ENCODE measurements at regions of chr22 and their contacts with region 1.

Region 1: DNA sequence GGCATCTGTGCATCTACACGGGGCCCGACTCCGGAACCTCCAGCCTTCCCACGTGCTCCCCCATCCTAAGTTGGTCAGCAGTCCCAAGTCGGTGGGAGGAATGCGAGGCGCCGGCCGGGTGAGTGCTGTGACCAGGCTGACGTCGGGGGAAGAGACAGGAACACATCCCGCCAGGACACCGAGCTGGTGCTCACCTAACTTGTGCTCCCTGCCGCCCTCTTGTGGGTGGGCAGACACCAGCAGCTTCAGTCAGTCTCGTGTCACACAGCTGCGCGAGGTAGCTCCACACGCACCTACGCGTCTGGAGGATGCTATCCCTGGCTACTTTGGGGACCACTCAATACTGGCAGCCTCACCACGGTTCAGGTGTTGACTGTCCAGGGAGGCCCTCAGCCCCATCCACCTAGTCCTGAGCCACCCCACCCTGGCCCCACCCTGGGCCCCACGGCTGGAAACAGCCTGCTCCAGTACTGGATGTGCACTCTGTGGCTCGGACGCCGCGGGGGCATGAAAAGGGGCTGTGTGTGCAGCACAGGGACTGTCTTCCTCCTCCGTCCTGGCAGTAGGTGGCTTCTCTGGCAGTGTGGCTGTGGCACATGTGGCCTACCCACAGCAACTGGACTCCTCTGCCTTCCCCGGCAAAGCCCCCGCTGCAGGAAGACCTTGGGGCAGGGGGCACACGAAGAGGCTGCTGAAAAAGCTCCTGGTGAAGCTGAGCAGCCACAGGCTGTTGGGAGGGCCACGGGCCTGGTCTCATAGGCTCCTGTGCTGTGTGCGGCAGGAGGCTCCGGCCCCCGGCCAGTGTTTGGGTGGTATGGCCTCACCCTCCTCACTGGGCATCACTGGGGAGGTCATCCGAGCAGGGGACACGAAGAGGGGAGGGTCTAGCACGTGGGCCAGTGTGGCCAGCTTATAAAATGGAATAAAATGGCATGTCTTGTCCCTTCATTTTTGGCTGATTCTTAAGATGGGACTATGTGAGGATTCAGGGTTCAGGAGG is 11.2 kb upstream of the BID start:
- DNase-seq: peak; percentile 56 to 66 (median 65)
- H3K4me3 ChIP-seq: no peak overlapping the region
- H3K4me3 Mint-ChIP-seq: no peak overlapping the region
- H3K27ac ChIP-seq: no peak overlapping the region
- H3K27ac Mint-ChIP-seq: peak overlapping the region in 2 of 7 donors; percentile 43 to 55
- H3K4me1 ChIP-seq: peaks cover 26% of the 10 kb centered on the region
- H3K4me1 Mint-ChIP-seq: peaks cover 7 to 27% (median 12%) of the 10 kb centered on the region in 4 donors
- H3K27me3 ChIP-seq: no peaks in the 10 kb centered on the region
- H3K27me3 Mint-ChIP-seq: no peaks in the 10 kb centered on the region

Region 2: GRCh38 chr22:17597217-17597616 is 188.3 kb before region 1 on chr22:
- CTCF ChIA-PET with region 1: no interaction called
- POLR2A ChIA-PET with region 1: no interaction called
- intact Hi-C with region 1: no loop called
- DNase-seq: no peak
- H3K4me3 ChIP-seq: no peak overlapping the region
- H3K4me3 Mint-ChIP-seq: no peak overlapping the region
- H3K27ac ChIP-seq: no peak overlapping the region
- H3K27ac Mint-ChIP-seq: peak overlapping the region in 1 of 7 donors; percentile 23
- H3K4me1 ChIP-seq: no peaks in the 10 kb centered on the region
- H3K4me1 Mint-ChIP-seq: peaks cover 0 to 4% (median 2%) of the 10 kb centered on the region in 4 donors
- H3K27me3 ChIP-seq: no peaks in the 10 kb centered on the region
- H3K27me3 Mint-ChIP-seq: no peaks in the 10 kb centered on the region

Region 3: DNA sequence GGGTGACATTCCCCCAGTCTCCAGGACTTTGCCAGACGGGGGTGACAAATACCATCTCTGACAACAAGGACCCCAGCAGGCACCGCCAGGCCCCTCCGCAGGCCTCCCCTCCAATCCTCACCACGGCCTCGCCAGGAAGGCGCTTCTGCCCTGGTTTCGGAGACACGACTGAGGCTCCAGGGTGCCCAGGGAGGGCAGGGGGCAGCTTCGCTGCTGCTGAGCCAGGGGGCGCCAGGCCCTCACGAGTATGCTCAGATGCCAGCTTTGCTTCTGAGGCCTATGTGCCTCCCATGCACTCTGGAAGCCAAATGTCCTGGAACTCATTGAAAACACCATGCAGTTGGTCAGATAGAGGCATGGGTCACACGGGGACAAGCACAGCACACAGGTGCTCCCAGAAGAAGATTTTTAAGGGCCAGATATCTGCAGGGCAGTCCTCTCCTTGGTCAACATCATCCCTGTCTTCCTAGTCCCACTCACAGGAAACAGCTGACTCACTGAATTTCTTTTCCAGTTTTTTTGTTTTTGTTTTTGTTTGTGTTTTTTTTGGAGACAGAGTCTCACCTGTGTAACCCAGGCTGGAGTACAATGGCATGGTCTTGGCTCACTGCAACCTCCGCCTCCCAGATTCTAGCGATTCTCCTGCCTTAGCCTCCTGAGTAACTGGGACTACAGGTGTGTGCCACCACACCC is 31.1 kb before region 1 on chr22:
- CTCF ChIA-PET with region 1: interaction called, 240 read pairs
- POLR2A ChIA-PET with region 1: interaction called, 3 read pairs
- intact Hi-C with region 1: loop called (anchors 1 kb)
- DNase-seq: peak in 1 of 5 donors; percentile 16
- H3K4me3 ChIP-seq: no peak overlapping the region
- H3K4me3 Mint-ChIP-seq: no peak overlapping the region
- H3K27ac ChIP-seq: no peak overlapping the region
- H3K27ac Mint-ChIP-seq: peak overlapping the region in 3 of 7 donors; percentile 27 to 67 (median 42)
- H3K4me1 ChIP-seq: no peaks in the 10 kb centered on the region
- H3K4me1 Mint-ChIP-seq: peaks cover 9 to 25% (median 10%) of the 10 kb centered on the region in 4 donors
- H3K27me3 ChIP-seq: no peaks in the 10 kb centered on the region
- H3K27me3 Mint-ChIP-seq: no peaks in the 10 kb centered on the region

Region 4: DNA sequence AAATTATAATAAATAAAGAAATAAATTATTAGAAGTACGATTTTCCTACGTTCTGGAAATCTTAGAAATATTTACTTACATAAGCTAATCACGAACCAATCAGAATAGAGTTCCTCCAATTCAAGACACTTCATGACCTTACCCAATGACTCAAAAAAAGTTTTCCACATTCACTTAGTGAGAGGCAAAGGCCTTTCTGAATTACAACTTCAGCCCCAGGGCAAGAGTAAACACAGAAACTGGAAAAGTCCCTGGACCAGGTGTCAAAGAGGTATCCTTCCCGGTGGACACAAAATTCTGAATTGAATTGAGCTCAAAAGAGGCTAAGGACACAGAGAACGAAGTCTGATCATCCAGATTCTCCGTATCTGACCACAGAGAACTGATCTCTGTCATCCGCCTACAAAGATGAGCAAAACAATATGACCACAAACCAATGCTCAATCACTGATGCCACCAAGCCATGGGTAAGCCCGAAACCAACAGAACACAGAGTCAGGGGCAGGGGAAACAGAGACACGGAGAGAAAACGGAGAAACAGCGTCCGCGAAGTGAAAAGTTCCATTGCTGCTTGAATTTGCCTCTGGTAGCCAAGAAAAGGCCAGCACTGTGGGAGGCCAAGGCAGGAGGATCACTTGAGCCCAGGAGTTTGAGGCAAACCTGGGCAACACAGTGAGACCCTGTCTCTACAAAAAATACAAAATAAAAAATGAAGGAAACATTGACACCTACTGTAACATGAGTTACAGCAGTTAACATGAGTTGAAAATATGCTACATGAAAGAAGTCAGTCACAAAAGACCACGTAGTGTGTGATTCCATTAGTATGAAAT is 18.0 kb before region 1 on chr22:
- CTCF ChIA-PET with region 1: interaction called, 58 read pairs
- POLR2A ChIA-PET with region 1: interaction called, 19 read pairs
- intact Hi-C with region 1: no loop called
- DNase-seq: peak; percentile 66 to 75 (median 67)
- H3K4me3 ChIP-seq: no peak overlapping the region
- H3K4me3 Mint-ChIP-seq: peak overlapping the region; percentile 65 to 91 (median 78)
- H3K27ac ChIP-seq: peak overlapping the region; percentile 42
- H3K27ac Mint-ChIP-seq: peak overlapping the region; percentile 69 to 97 (median 91)
- H3K4me1 ChIP-seq: peaks cover 36% of the 10 kb centered on the region
- H3K4me1 Mint-ChIP-seq: peaks cover 30 to 71% (median 46%) of the 10 kb centered on the region in 4 donors
- H3K27me3 ChIP-seq: no peaks in the 10 kb centered on the region
- H3K27me3 Mint-ChIP-seq: no peaks in the 10 kb centered on the region

Region 5: DNA sequence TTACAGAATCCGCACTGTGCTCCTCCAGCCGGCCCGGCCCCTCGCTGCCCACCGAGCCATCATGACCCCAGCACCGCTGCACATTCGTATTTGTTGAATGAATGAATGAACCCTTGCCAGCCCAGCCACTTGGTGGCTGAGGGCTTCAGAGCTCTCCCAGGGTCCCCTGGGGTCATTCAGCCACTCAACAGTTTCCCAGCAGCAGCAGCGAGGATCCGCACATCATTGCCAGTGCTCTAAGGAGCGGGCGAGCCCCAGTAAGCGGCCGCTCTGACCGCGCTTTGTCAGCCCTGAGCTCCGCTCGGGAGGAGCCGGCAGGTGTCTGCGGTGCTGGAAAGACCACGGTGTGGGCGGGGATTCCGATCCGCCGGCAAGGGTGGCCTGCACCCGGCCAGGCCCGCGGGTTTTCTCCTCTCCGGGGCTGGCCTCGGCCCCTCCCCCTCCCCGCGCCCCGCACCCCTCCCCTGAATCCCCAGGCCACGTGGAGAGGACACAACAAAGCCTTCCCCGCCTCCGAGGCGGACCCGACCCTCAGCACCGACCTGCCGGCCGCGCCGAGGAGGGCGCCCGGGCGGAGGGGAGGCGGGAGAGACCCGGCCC is 11.8 kb before region 1 on chr22:
- CTCF ChIA-PET with region 1: interaction called, 58 read pairs
- POLR2A ChIA-PET with region 1: interaction called, 19 read pairs
- intact Hi-C with region 1: no loop called
- DNase-seq: peak; percentile 57 to 77 (median 60)
- H3K4me3 ChIP-seq: peak overlapping the region; percentile 51 to 61
- H3K4me3 Mint-ChIP-seq: peak overlapping the region; percentile 87 to 96 (median 90)
- H3K27ac ChIP-seq: peak overlapping the region; percentile 57
- H3K27ac Mint-ChIP-seq: peak overlapping the region; percentile 63 to 95 (median 88)
- H3K4me1 ChIP-seq: peaks cover 70% of the 10 kb centered on the region
- H3K4me1 Mint-ChIP-seq: peaks cover 40 to 88% (median 65%) of the 10 kb centered on the region in 4 donors
- H3K27me3 ChIP-seq: no peaks in the 10 kb centered on the region
- H3K27me3 Mint-ChIP-seq: no peaks in the 10 kb centered on the region

Region 6: GRCh38 chr22:17866127-17866526 is 80.6 kb after region 1 on chr22:
- CTCF ChIA-PET with region 1: no interaction called
- POLR2A ChIA-PET with region 1: no interaction called
- intact Hi-C with region 1: no loop called
- DNase-seq: no peak
- H3K4me3 ChIP-seq: no peak overlapping the region
- H3K4me3 Mint-ChIP-seq: no peak overlapping the region
- H3K27ac ChIP-seq: no peak overlapping the region
- H3K27ac Mint-ChIP-seq: no peak overlapping the region
- H3K4me1 ChIP-seq: no peaks in the 10 kb centered on the region
- H3K4me1 Mint-ChIP-seq: peaks cover 0 to 6% (median 3%) of the 10 kb centered on the region in 4 donors
- H3K27me3 ChIP-seq: no peaks in the 10 kb centered on the region
- H3K27me3 Mint-ChIP-seq: no peaks in the 10 kb centered on the region

Measured in CD4-positive, alpha-beta memory T cell (primary cell).